Caco-2 (cell line): ENCODE measurements at regions of chr15 and their contacts with region 1.

Region 1: GRCh38 chr15:88995449-88995848 is 82.3 kb upstream of the MFGE8 start:
- DNase-seq: peak; percentile 73 to 84
- H3K4me3 ChIP-seq: peak overlapping the region; percentile 26
- H3K4me3 Mint-ChIP-seq: peak overlapping the region; percentile 62
- H3K27ac Mint-ChIP-seq: peak overlapping the region; percentile 77
- H3K4me1 ChIP-seq: peaks cover 58% of the 10 kb centered on the region
- H3K4me1 Mint-ChIP-seq: peaks cover 50% of the 10 kb centered on the region
- H3K27me3 ChIP-seq: no peaks in the 10 kb centered on the region
- H3K27me3 Mint-ChIP-seq: no peaks in the 10 kb centered on the region
- CTCF ChIP-seq: no peak

Region 2: GRCh38 chr15:88859550-88859949 is 135.9 kb before region 1 on chr15:
- CTCF ChIA-PET with region 1: no interaction called
- POLR2A ChIA-PET with region 1: no interaction called
- intact Hi-C with region 1: no loop called
- DNase-seq: no peak
- H3K4me3 ChIP-seq: no peak overlapping the region
- H3K4me3 Mint-ChIP-seq: no peak overlapping the region
- H3K27ac Mint-ChIP-seq: no peak overlapping the region
- H3K4me1 ChIP-seq: no peaks in the 10 kb centered on the region
- H3K4me1 Mint-ChIP-seq: no peaks in the 10 kb centered on the region
- H3K27me3 ChIP-seq: no peaks in the 10 kb centered on the region
- H3K27me3 Mint-ChIP-seq: peaks cover 1% of the 10 kb centered on the region
- CTCF ChIP-seq: no peak

Region 3: DNA sequence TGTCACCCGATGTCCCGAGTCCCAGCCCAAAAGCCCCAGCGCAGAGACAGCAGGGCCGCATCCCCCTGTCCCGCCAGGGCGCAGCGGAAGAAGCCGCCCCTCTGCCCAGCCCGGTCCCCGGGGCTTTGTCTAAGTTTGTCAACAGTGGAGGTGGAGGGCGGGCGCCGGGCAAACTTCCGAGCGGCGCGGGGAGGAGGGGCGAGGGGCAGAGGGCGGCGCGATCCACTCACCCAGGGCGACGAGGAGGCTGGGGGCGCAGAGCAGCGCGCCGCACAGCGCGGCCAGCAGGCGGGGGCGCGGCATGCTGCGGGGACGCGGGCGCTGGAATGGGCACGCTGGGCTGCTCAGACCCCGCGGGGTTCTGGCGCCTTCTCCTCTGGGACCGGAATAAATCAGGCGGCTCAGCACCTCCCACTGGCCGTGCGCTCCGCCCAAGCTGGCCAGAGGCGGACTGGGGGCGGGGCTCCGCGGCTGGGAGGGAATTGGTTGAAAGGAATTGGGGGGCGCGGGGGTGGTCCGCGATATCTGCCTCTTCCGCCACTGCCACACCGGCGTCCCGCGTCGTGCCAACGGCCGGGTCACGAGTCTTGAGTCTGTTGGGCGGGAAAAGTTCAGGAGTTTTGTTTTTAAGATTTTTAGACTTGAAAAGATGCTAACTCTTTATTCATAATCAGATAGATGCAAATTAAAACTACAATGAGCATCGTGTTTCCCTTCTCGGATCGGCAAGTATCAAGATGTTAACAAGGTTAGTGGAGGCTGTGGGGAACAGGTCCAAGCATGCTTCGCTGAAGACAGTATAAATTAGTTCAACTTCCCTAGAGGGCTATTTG is 82.2 kb before region 1 on chr15 and contains the start of gene MFGE8:
- CTCF ChIA-PET with region 1: no interaction called
- POLR2A ChIA-PET with region 1: interaction called, 8 read pairs
- intact Hi-C with region 1: loop called (anchors 2 kb)
- DNase-seq: peak; percentile 84 to 87
- H3K4me3 ChIP-seq: peak within 1 kb of the TSS; percentile 80
- H3K4me3 Mint-ChIP-seq: peak within 1 kb of the TSS; percentile 91
- H3K27ac Mint-ChIP-seq: peak within 1 kb of the TSS; percentile 88
- H3K4me1 ChIP-seq: peaks cover 15% of the 10 kb centered on the region
- H3K4me1 Mint-ChIP-seq: peaks cover 13% of the 10 kb centered on the region
- H3K27me3 ChIP-seq: no peaks in the 10 kb centered on the region
- H3K27me3 Mint-ChIP-seq: no peaks in the 10 kb centered on the region
- CTCF ChIP-seq: peak in 1 of 2 experiments; percentile 1
- total RNA-seq, gene MFGE8: 409 and 453 TPM in 2 replicates

Region 4: DNA sequence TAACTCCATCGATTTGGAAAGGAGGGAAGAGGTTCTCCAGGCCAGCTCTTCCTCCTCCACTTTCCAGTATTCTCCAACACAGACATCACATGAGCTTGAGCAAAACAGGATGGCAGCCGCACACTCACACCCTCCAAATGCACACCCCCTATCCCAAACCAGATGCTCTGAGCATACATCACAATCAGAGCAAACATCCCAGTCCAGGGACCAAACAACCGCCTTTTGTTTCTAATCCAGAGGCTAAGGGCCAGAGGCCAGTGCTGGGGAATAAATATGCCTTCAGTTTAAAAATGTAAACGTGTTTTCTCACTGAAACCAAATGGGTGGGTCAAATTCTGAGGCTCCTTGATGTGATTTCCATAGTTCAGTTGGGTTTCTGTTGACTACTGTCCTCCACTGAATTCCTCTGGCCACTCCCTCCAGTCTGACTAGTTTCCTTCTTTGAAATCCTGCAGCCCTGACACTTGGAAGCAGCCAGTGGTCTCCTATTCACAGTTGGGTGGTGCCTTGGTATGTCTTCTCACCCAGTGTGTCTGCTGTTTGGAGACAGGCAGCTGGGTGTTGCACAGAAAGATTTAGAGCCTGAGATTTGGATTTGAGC is 63.1 kb before region 1 on chr15:
- CTCF ChIA-PET with region 1: no interaction called
- POLR2A ChIA-PET with region 1: no interaction called
- intact Hi-C with region 1: loop called (anchors 2 kb)
- DNase-seq: peak in 1 of 2 experiments; percentile 51
- H3K4me3 ChIP-seq: no peak overlapping the region
- H3K4me3 Mint-ChIP-seq: no peak overlapping the region
- H3K27ac Mint-ChIP-seq: peak overlapping the region; percentile 64
- H3K4me1 ChIP-seq: peaks cover 16% of the 10 kb centered on the region
- H3K4me1 Mint-ChIP-seq: peaks cover 13% of the 10 kb centered on the region
- H3K27me3 ChIP-seq: no peaks in the 10 kb centered on the region
- H3K27me3 Mint-ChIP-seq: no peaks in the 10 kb centered on the region
- CTCF ChIP-seq: no peak

Region 5: GRCh38 chr15:88974392-88974791 is 21.1 kb before region 1 on chr15:
- CTCF ChIA-PET with region 1: interaction called, 5 read pairs
- POLR2A ChIA-PET with region 1: interaction called, 3 read pairs
- intact Hi-C with region 1: loop called (anchors 1 kb)
- DNase-seq: peak; percentile 73 to 78
- H3K4me3 ChIP-seq: no peak overlapping the region
- H3K4me3 Mint-ChIP-seq: peak overlapping the region; percentile 27
- H3K27ac Mint-ChIP-seq: peak overlapping the region; percentile 63
- H3K4me1 ChIP-seq: peaks cover 36% of the 10 kb centered on the region
- H3K4me1 Mint-ChIP-seq: peaks cover 6% of the 10 kb centered on the region
- H3K27me3 ChIP-seq: no peaks in the 10 kb centered on the region
- H3K27me3 Mint-ChIP-seq: no peaks in the 10 kb centered on the region
- CTCF ChIP-seq: no peak

Region 6: DNA sequence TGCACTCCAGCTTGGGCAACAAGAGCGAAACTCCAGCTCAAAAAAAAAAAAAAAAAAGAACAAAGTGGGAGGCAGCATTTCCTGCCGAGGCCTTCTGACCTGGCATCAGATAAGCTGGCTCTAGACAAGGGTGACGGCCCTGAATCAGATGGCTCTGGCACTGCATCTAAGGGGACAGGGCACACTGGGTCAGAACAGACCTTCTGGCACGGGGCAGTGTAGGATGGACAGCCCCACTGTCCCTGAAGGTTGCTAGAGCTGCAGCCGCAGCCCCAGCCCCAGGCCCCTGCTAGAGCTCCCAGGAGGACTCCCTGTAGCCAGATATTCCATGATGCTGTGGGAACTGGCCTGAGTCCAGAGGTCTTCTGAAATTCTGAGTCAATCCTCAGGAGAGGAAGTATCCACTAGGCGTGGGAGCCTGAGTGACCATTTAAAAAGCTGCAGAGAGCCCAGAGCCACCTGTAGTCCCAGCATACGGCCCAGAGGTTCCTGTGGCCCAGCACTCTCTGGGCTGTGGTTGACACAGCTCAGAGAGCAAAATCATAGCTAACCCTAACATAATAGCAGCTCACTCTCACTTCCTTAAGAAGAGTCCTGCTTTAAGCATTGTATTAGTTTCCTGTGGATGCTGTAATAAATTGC is 13.0 kb before region 1 on chr15:
- CTCF ChIA-PET with region 1: interaction called, 6 read pairs
- POLR2A ChIA-PET with region 1: interaction called, 12 read pairs
- intact Hi-C with region 1: no loop called
- DNase-seq: peak in 1 of 2 experiments; percentile 49
- H3K4me3 ChIP-seq: no peak overlapping the region
- H3K4me3 Mint-ChIP-seq: peak overlapping the region; percentile 50
- H3K27ac Mint-ChIP-seq: peak overlapping the region; percentile 83
- H3K4me1 ChIP-seq: peaks cover 82% of the 10 kb centered on the region
- H3K4me1 Mint-ChIP-seq: peaks cover 29% of the 10 kb centered on the region
- H3K27me3 ChIP-seq: no peaks in the 10 kb centered on the region
- H3K27me3 Mint-ChIP-seq: no peaks in the 10 kb centered on the region
- CTCF ChIP-seq: no peak

Region 7: DNA sequence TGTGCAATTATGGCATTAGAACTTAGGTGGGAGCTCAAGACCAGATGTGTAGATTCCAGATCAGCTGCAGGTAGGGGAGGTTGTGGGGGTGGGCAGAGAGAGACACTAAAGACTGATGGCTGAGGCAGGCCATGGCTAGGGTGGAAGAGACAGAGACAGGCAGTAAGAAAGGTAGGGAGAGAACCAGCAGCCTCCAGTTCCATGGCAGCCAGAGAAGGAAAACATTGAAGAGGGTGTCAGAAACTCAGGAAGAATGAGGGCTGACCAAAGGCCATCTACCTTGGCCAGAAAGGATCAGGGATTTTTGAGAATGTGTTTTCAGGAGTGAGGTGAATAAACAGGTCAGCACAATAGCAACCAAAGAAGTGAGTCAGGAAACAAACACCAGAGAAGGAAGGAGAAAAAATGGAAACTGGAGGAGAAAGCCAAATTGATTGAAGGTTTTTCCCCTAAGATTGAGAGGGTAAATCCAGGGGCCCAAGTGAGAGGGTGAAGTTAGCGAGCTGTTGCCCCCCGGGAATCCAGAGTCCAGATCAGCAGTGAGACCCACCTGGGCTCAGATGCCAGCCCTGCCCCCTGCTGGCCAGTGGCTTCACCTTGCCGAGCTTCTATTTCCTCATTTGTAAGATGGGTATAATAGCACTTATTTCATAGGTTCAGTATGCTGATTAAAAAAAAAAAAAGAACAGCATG is 133.8 kb after region 1 on chr15:
- CTCF ChIA-PET with region 1: no interaction called
- POLR2A ChIA-PET with region 1: no interaction called
- intact Hi-C with region 1: loop called (anchors 10 kb)
- DNase-seq: peak in 1 of 2 experiments; percentile 53
- H3K4me3 ChIP-seq: no peak overlapping the region
- H3K4me3 Mint-ChIP-seq: no peak overlapping the region
- H3K27ac Mint-ChIP-seq: no peak overlapping the region
- H3K4me1 ChIP-seq: peaks cover 61% of the 10 kb centered on the region
- H3K4me1 Mint-ChIP-seq: peaks cover 40% of the 10 kb centered on the region
- H3K27me3 ChIP-seq: no peaks in the 10 kb centered on the region
- H3K27me3 Mint-ChIP-seq: no peaks in the 10 kb centered on the region
- CTCF ChIP-seq: peak; percentile 60 to 79